Natural killer cell (primary cell): ENCODE measurements at regions of chr6 and their contacts with region 1.

Region 1: GRCh38 chr6:170480050-170480692 is 72.9 kb downstream of the PSMB1 start:
- DNase-seq: no peak
- ATAC-seq: no peak
- H3K4me3 ChIP-seq: no peak overlapping the region
- H3K4me3 Mint-ChIP-seq: no peak overlapping the region
- H3K27ac ChIP-seq: no peak overlapping the region
- H3K27ac Mint-ChIP-seq: no peak overlapping the region
- H3K4me1 ChIP-seq: peaks cover 16% of the 10 kb centered on the region
- H3K4me1 Mint-ChIP-seq: peaks cover 35 to 42% of the 10 kb centered on the region in 2 donors
- H3K27me3 ChIP-seq: no peaks in the 10 kb centered on the region
- H3K27me3 Mint-ChIP-seq: peaks cover 0 to 4% of the 10 kb centered on the region in 2 donors
- CTCF ChIP-seq: no peak

Region 2: GRCh38 chr6:170295510-170296422 is 184.4 kb before region 1 on chr6:
- intact Hi-C with region 1: no loop called
- DNase-seq: peak in 1 of 2 donors; percentile 69
- ATAC-seq: peak; percentile 57 to 67 (median 59)
- H3K4me3 ChIP-seq: peak overlapping the region; percentile 4
- H3K4me3 Mint-ChIP-seq: peak overlapping the region; percentile 73
- H3K27ac ChIP-seq: no peak overlapping the region
- H3K27ac Mint-ChIP-seq: peak overlapping the region in 1 of 2 donors; percentile 18
- H3K4me1 ChIP-seq: peaks cover 44% of the 10 kb centered on the region
- H3K4me1 Mint-ChIP-seq: peaks cover 17 to 44% of the 10 kb centered on the region in 2 donors
- H3K27me3 ChIP-seq: peaks cover 33% of the 10 kb centered on the region
- H3K27me3 Mint-ChIP-seq: peaks cover 25 to 60% of the 10 kb centered on the region in 2 donors
- CTCF ChIP-seq: no peak

Region 3: GRCh38 chr6:170429450-170429849 is 50.7 kb before region 1 on chr6:
- intact Hi-C with region 1: loop called (anchors 10 kb)
- DNase-seq: no peak
- ATAC-seq: no peak
- H3K4me3 ChIP-seq: no peak overlapping the region
- H3K4me3 Mint-ChIP-seq: no peak overlapping the region
- H3K27ac ChIP-seq: no peak overlapping the region
- H3K27ac Mint-ChIP-seq: no peak overlapping the region
- H3K4me1 ChIP-seq: no peaks in the 10 kb centered on the region
- H3K4me1 Mint-ChIP-seq: peaks cover 7 to 16% of the 10 kb centered on the region in 2 donors
- H3K27me3 ChIP-seq: no peaks in the 10 kb centered on the region
- H3K27me3 Mint-ChIP-seq: no peaks in the 10 kb centered on the region
- CTCF ChIP-seq: no peak